Heart right ventricle (tissue), 16 donors: ENCODE measurements at regions of chr1 and their contacts with region 1.

Region 1: GRCh38 chr1:182367926-182368325 is 23.7 kb downstream of the GLUL start:
- DNase-seq: no peak
- ATAC-seq: peak in 4 of 8 donors; percentile 18 to 35 (median 32)
- H3K4me3 ChIP-seq: no peak overlapping the region
- H3K27ac ChIP-seq: no peak overlapping the region
- H3K4me1 ChIP-seq: peaks cover 0 to 19% (median 7%) of the 10 kb centered on the region in 9 donors
- H3K27me3 ChIP-seq: no peaks in the 10 kb centered on the region
- CTCF ChIP-seq: no peak

Region 2: DNA sequence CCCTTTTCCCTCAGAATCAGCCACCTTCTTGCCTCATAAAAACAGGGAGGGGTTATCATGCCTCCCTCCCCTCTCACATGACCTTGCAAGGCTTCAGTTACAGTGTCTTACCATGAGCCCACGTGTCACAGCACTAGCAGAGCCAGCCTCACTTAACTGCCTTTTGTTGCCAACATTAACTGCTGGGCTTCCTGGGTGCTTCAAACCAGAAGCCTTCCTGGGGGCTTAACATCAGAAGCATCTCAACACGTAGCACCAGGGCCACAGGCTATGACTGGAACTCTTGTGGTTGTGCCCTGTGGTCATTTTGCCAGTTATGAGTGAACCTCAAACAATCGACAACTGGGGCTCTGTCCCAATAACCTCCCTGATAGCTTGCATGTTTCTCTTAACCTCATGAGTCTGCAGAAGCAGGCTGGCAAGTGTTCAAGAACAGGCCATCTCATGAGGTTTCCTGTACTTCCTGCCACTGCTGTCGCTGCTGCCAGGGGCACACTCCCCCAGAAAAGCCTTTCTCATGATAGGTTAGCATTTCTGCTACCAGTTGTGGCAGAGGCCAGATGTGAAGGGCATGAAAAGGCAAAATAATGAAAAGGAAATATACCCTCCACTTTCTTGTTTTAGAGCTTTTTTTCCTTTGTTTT is 108.6 kb before region 1 on chr1:
- intact Hi-C with region 1: loop called in 1 of 10 experiments (anchors 10 kb)
- DNase-seq: peak in 1 of 2 donors; percentile 46
- ATAC-seq: peak in 7 of 8 donors; percentile 29 to 77 (median 56)
- H3K4me3 ChIP-seq: no peak overlapping the region
- H3K27ac ChIP-seq: peak overlapping the region in 6 of 10 donors; percentile 4 to 75 (median 28)
- H3K4me1 ChIP-seq: peaks cover 8 to 50% (median 34%) of the 10 kb centered on the region in 9 donors
- H3K27me3 ChIP-seq: no peaks in the 10 kb centered on the region
- CTCF ChIP-seq: no peak